ENCODE measurements at regions of chr1 and their contacts with region 1.

Region 1: DNA sequence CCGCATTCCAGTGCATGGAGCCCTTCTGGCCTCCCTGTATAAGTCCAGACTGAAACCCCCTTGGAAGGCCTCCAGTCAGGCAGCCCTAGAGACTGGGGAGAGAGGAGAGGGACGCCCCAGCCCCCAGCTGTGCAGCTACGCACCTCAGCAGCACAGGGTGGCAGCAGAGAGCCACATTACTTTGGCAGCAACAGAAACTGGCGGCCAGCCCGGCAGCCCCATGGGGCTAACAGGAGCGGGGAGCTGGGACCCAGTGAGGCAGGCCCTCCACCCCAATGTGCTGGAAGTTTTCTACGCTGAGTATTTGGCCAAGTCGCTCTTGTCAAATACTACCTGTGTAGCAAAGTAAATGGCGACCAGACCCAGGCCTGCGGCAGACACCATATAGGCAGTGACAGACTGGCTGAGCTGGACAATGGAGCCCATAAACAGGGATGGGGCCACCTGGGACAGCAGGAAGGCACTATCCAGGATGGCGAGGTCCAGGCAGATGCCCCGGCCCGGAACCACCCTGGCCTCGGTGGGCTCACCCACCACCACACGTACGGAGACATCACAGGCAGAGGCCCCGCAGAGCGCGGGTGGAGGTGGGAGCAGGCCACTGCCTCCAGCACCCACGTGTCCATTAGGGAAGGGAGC is 21.2 kb downstream of the SLC45A3 start:
- DNase-seq: peak; percentile 88
- ATAC-seq: peak; percentile 99
- H3K4me3 Mint-ChIP-seq: no peak overlapping the region
- H3K27ac Mint-ChIP-seq: no peak overlapping the region
- H3K4me1 Mint-ChIP-seq: no peaks in the 10 kb centered on the region
- H3K27me3 Mint-ChIP-seq: no peaks in the 10 kb centered on the region

Region 2: DNA sequence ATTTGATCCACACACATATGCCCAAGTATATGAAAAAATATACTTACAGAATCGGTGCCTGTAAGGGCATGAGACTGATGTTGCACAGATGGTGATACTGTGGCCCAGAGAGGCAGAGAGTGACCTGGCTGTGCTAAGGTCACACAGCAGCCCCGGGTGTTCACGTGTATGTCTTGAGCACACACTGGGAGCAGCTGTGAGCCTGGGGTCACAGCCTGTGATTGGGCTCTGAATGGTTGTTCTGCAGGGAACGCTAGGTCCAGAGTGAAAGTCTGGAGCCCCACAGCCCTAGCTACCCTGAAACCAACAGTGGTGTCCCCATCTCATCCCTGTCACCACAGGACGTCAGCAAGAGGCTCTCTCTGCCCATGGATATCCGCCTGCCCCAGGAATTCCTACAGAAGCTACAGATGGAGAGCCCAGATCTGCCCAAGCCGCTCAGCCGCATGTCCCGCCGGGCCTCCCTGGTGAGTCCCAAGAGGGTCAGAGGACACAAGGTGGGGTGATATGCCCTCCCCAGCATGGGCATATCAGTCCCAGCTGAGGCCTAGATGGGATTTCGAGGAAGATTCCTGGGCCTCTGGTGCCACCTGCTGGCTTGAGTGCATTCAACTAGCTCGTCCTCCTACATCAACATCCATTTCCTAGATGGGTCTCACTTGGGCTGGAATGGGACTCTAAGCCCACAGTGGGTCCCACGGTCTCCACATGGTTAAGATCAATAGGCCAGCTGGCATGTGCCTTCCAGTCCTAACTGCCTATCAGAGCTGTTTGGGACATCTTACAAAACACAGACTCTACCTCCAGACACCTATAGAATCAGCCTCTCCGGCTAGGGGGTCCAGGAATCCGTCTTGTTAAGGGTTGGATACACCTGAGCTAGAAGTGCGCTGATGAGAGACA is 134.9 kb before region 1 on chr1:
- CTCF ChIA-PET with region 1: interaction called, 48 read pairs
- POLR2A ChIA-PET with region 1: no interaction called
- intact Hi-C with region 1: loop called (anchors 1 kb)
- DNase-seq: peak; percentile 87
- ATAC-seq: peak; percentile 45
- H3K4me3 Mint-ChIP-seq: no peak overlapping the region
- H3K27ac Mint-ChIP-seq: no peak overlapping the region
- H3K4me1 Mint-ChIP-seq: no peaks in the 10 kb centered on the region
- H3K27me3 Mint-ChIP-seq: no peaks in the 10 kb centered on the region

Region 3: DNA sequence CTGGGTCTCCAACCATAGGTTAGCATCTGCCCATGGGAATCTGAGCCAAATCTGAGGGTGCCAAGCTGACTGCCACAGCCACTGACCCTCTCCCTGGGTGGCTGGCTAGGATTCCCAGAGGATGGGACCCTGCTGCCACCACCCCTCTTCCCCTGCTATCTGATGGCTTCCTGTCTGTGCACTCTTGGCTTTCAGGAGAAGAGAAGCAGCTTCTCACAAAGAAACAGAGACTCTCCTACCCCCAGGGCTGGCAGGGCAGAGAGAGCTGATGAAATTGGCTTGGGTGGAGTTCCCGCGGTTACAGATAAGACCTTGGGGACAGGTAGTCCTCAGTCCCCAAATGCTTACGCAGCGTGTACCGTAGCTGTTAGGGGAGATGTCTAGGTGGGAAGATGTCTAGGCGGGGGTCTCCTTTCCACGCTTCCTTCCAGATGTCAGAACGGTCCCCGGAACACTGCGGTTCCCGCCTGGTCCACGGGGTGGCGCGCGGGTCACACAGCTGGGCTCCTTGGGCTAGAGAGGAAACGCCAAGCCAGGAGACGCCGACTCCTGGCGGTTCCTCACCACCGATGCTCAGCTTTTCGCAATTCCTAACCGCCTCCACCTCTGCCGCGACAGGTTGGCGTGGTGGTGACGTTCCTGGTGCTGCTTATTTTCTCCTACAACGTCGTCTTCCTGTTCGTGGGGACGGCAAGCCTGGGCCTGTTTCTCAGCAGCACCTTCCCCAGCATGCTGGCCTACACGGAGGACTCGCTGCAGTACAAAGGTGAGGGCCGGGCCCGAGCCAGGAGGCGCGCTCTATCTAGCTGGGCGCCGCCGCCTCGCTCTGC is 67.3 kb before region 1 on chr1:
- CTCF ChIA-PET with region 1: interaction called, 346 read pairs
- POLR2A ChIA-PET with region 1: interaction called, 8 read pairs
- intact Hi-C with region 1: loop called (anchors 1 kb)
- DNase-seq: peak; percentile 94
- ATAC-seq: peak; percentile 82
- H3K4me3 Mint-ChIP-seq: peak overlapping the region; percentile 78
- H3K27ac Mint-ChIP-seq: peak overlapping the region; percentile 78
- H3K4me1 Mint-ChIP-seq: peaks cover 35% of the 10 kb centered on the region
- H3K27me3 Mint-ChIP-seq: no peaks in the 10 kb centered on the region

Region 4: DNA sequence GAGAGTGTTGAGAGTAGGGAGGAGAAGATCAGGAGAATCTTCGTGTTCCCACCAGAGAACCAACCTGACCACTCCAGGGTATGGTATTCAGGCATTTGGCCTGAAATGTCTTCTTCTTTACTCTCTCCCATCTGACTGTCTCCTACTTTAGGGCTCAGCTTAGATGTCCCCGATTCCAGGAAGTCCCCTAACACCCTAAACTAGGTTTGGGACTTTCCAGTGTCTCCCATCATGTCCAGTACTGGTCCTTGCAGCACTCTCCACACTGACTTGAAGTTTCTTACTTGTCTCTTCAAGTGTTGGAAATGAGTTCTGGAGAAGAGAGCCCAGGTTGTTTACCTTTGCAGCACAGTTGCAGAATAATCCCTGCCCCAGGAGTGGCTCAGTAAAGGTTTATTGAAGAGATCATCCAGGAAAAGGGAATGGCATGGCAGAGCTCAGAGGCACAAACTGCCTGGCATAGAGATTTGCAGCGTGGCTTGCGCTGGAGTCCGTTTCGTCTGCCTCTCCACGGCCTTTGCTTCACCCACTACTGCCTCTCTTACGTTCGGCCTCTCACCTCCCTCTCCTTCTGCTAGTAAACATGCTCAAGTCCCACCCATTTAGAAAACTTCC is 21.1 kb before region 1 on chr1:
- CTCF ChIA-PET with region 1: interaction called, 55 read pairs
- POLR2A ChIA-PET with region 1: no interaction called
- intact Hi-C with region 1: loop called in 1 of 2 experiments (anchors 2 kb)
- DNase-seq: no peak
- ATAC-seq: no peak
- H3K4me3 Mint-ChIP-seq: no peak overlapping the region
- H3K27ac Mint-ChIP-seq: no peak overlapping the region
- H3K4me1 Mint-ChIP-seq: no peaks in the 10 kb centered on the region
- H3K27me3 Mint-ChIP-seq: peaks cover 6% of the 10 kb centered on the region

Region 5: DNA sequence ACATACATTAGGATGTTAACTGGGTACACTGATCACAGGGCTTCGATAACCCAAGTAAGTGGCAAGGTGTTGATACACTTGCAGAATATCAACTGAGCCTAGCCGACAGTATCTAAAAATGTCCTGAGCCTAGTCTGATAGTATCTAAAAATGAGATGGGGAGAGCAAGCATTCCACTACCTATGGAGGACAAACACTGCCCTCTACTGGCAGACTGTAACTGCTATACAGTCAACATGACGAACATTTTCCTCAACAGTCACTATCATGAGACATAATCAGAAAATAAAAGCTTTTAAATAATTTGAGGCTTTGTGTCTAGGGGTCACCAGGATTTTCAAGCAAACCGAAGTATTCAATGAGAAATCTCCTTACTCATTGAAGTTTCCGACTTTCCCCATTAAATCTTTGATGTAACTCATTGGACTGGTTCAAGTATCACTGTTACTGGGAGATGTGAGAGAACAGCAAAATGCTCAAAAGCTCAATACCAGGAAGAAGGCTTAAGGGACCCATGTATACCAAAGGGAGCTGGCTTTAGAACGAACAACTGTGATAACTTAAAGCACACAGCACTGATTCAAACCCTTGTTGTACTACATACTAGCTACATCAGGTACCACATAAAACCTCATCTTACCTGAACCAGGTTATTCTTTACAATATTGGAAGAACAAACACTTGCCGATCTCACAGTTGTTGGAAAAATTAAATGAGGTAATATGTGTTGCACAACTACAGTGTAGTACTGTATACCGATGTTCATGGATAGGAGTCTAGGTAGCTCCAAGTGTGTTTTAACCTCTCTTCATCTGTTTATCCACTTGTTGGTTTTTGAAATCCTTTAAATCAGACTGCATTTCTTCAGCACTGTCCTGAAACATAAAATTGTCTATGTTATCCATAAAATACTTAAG is 52.3 kb after region 1 on chr1:
- CTCF ChIA-PET with region 1: interaction called, 225 read pairs
- POLR2A ChIA-PET with region 1: no interaction called
- intact Hi-C with region 1: loop called (anchors 1 kb)
- DNase-seq: peak; percentile 78
- ATAC-seq: peak; percentile 90
- H3K4me3 Mint-ChIP-seq: no peak overlapping the region
- H3K27ac Mint-ChIP-seq: peak overlapping the region; percentile 43
- H3K4me1 Mint-ChIP-seq: peaks cover 13% of the 10 kb centered on the region
- H3K27me3 Mint-ChIP-seq: no peaks in the 10 kb centered on the region

Region 6: GRCh38 chr1:205782627-205783412 is 123.8 kb after region 1 on chr1:
- CTCF ChIA-PET with region 1: interaction called, 6 read pairs
- POLR2A ChIA-PET with region 1: no interaction called
- intact Hi-C with region 1: loop called in 1 of 2 experiments (anchors 1 kb)
- DNase-seq: no peak
- ATAC-seq: peak; percentile 76
- H3K4me3 Mint-ChIP-seq: no peak overlapping the region
- H3K27ac Mint-ChIP-seq: no peak overlapping the region
- H3K4me1 Mint-ChIP-seq: peaks cover 5% of the 10 kb centered on the region
- H3K27me3 Mint-ChIP-seq: no peaks in the 10 kb centered on the region

Region 7: DNA sequence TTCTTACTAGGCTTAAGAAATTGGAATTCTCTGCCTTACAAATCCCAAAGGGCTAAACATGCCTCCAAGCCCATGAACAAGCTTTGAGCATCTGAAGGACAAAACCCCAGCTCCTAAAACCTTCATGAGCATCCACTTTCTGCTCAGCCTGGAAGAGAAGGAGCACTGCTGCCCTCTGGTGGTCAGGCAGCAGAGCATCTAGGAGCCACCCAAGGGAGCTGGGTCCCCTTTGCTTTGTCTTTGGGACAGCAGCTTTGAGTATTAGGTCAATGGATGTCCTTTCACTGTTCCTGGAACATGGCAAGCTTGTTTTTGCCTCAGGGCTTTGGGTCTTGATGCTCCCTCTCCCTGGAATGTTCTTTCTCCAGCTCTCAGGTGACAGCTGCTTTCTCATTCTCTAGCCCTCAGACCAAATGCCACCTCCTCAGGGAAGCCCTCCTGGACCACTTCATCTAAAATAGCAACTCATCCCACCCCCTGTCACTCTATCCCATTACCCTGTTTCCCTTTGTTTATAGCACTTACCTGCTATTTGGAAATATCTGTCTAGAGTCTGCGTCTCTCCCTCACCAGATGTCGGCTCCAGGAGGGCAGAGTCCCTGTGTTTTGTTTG is 318.4 kb after region 1 on chr1:
- CTCF ChIA-PET with region 1: interaction called, 109 read pairs
- POLR2A ChIA-PET with region 1: no interaction called
- intact Hi-C with region 1: loop called (anchors 1 to 2 kb)
- DNase-seq: peak; percentile 90
- ATAC-seq: peak; percentile 89
- H3K4me3 Mint-ChIP-seq: no peak overlapping the region
- H3K27ac Mint-ChIP-seq: no peak overlapping the region
- H3K4me1 Mint-ChIP-seq: no peaks in the 10 kb centered on the region
- H3K27me3 Mint-ChIP-seq: no peaks in the 10 kb centered on the region

Region 8: GRCh38 chr1:206112600-206113319 is 453.7 kb after region 1 on chr1:
- CTCF ChIA-PET with region 1: no interaction called
- POLR2A ChIA-PET with region 1: no interaction called
- intact Hi-C with region 1: no loop called
- DNase-seq: no peak
- ATAC-seq: no peak
- H3K4me3 Mint-ChIP-seq: no peak overlapping the region
- H3K27ac Mint-ChIP-seq: no peak overlapping the region
- H3K4me1 Mint-ChIP-seq: peaks cover 6% of the 10 kb centered on the region
- H3K27me3 Mint-ChIP-seq: peaks cover 18% of the 10 kb centered on the region